Endothelial cell of umbilical vein (primary cell): ENCODE measurements at regions of chr6 and their contacts with region 1.

Region 1: DNA sequence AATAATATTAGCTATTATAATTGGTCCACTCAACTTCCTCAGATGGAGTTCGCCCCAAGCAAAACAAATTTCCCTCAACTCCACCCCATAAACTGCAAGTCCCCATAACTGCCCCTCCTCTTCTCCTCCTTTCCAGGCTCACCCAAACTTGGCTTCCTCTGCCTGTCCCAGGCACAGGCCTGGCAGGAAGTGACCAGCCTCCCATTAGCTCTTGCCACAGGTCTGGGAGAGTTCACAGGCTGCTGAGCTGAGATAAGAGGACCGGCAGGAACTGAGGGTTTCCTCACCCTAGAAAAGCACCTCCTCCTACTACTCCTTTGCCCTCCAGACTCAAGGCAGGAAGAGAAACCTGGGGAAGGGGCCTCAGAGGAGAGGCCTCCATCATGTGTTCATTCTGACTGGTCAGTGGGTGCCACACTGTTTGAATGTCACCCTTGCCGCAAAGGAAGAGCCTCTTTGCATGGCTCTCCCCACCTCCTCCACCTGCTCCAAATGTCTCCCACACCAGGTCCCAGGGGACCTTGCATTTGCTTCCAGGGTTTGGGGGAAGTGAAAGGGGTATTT is 24.5 kb upstream of the SMIM29 start:
- DNase-seq: peak; percentile 95
- H3K4me3 ChIP-seq: no peak overlapping the region
- H3K27ac ChIP-seq: peak overlapping the region; percentile 6
- H3K4me1 ChIP-seq: peaks cover 18% of the 10 kb centered on the region
- H3K27me3 ChIP-seq: no peaks in the 10 kb centered on the region
- CTCF ChIP-seq: no peak
- POLR2A ChIP-seq: peak; percentile 75

Region 2: GRCh38 chr6:34223956-34224940 is 49.1 kb before region 1 on chr6:
- CTCF ChIA-PET with region 1: no interaction called
- POLR2A ChIA-PET with region 1: no interaction called
- dilution Hi-C with region 1: no loop called
- intact Hi-C with region 1: loop called (anchors 1 kb)
- DNase-seq: peak; percentile 95
- H3K4me3 ChIP-seq: peak overlapping the region; percentile 37 to 69 (median 41)
- H3K27ac ChIP-seq: peak overlapping the region; percentile 99
- H3K4me1 ChIP-seq: peaks cover 16% of the 10 kb centered on the region
- H3K27me3 ChIP-seq: no peaks in the 10 kb centered on the region
- CTCF ChIP-seq: no peak
- POLR2A ChIP-seq: no peak

Region 3: GRCh38 chr6:34305982-34306708 is 32.8 kb after region 1 on chr6:
- CTCF ChIA-PET with region 1: interaction called, 3 read pairs
- POLR2A ChIA-PET with region 1: interaction called, 4 read pairs
- dilution Hi-C with region 1: no loop called
- intact Hi-C with region 1: loop called (anchors 1 kb)
- DNase-seq: peak; percentile 92
- H3K4me3 ChIP-seq: no peak overlapping the region
- H3K27ac ChIP-seq: peak overlapping the region; percentile 25
- H3K4me1 ChIP-seq: peaks cover 14% of the 10 kb centered on the region
- H3K27me3 ChIP-seq: no peaks in the 10 kb centered on the region
- CTCF ChIP-seq: no peak
- POLR2A ChIP-seq: no peak

Region 4: DNA sequence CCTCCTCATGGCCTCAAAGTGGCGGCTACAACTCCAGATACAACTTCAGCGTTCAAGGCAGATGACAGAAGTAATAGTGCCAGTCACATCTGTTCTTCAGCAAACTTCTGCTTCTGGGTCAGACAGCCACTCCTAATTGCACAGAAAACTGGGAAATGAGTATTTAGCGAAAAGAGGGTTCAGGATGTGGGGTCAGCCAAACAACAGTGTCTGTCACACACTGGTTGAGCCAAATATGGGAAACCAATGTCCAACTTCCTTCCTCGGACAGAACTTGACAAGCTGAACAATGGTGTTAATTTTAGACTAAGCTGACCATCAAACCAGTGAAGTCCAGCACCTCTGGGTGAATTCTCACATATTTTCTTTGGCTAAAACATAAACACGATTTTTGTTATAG is 97.0 kb after region 1 on chr6:
- CTCF ChIA-PET with region 1: no interaction called
- POLR2A ChIA-PET with region 1: no interaction called
- dilution Hi-C with region 1: no loop called
- intact Hi-C with region 1: no loop called
- DNase-seq: peak; percentile 85
- H3K4me3 ChIP-seq: no peak overlapping the region
- H3K27ac ChIP-seq: peak overlapping the region; percentile 39
- H3K4me1 ChIP-seq: peaks cover 23% of the 10 kb centered on the region
- H3K27me3 ChIP-seq: no peaks in the 10 kb centered on the region
- CTCF ChIP-seq: no peak
- POLR2A ChIP-seq: no peak

Region 5: GRCh38 chr6:34423254-34423653 is 149.9 kb after region 1 on chr6:
- CTCF ChIA-PET with region 1: no interaction called
- POLR2A ChIA-PET with region 1: no interaction called
- dilution Hi-C with region 1: no loop called
- intact Hi-C with region 1: no loop called
- DNase-seq: no peak
- H3K4me3 ChIP-seq: no peak overlapping the region
- H3K27ac ChIP-seq: no peak overlapping the region
- H3K4me1 ChIP-seq: peaks cover 15% of the 10 kb centered on the region
- H3K27me3 ChIP-seq: no peaks in the 10 kb centered on the region
- CTCF ChIP-seq: no peak
- POLR2A ChIP-seq: no peak